ENCODE measurements at regions of chr6 and their contacts with region 1.

Region 1: DNA sequence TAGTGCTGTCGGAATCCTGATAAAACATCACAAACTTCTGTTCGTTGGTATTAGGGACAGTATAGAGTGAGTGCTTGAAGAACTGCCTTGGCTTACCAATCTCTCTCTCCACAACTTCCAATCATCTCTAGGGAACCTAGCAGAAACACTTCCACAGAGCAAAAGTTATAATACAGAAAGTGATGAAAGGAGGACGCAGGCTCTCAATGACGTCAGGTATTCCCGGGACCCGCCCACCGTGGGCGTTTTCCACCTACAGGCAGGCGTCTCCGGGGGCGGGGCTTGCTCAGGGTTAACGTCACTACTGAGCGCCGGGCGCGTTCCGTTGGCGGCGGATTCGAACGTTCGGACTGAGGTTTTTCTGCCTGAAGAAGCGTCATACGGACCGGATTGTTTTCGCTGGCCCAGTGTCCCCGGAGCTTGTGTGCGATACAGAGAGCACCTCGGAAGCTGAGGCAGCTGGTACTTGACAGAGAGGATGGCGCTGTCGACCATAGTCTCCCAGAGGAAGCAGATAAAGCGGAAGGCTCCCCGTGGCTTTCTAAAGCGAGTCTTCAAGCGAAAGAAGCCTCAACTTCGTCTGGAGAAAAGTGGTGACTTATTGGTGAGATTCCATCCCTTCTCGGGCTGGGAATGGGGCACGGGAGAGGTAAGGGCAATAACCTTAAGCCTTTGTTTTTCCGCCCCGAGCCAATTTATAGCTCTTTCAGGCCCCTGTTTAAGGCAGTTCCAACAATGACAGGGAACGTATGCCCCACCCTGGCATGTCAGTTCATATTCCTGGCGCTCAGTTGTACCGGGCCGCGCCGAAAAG is at the start of gene CENPW:
- DNase-seq: peak; percentile 93
- H3K4me3 Mint-ChIP-seq: no peak within 1 kb of the TSS
- H3K27ac Mint-ChIP-seq: no peak within 1 kb of the TSS
- H3K4me1 Mint-ChIP-seq: peaks cover 25% of the 10 kb centered on the region
- H3K27me3 Mint-ChIP-seq: no peaks in the 10 kb centered on the region
- total RNA-seq, gene CENPW: 54.7 and 54.8 TPM in 2 replicates

Region 2: DNA sequence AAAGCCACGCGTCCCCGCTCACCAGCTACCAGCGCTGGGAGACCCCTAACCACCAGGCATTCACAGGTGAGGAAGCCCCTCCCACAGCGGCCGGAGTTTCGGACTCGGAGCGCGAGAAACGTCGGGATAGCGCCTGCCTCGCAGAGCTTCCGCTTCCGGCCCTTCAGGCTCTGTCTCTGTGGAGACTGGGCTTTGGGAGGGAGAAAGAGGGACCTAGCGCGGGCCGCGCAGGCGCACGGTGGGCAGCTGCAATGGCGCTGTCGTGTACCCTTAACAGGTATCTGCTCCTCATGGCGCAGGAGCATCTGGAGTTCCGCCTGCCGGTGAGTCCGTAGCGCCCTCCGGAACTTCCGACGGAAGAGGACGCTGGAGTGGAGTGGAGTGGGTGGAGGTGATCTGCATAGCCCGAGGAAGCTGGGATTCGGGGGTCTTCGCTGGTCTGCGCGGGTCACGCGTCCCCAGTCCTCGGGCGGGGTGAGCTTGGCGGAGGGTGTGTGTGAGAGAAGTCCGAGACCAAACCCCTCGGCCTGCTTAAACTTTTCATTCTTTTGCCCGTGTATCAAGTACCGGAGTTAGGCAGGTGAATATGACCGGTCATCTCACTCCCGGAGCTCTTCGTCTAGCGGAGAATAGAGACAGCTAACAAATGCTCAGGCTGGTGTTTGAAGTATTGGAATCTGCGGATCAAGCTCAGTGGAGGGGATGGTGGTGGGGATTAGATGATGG is 353.5 kb before region 1 on chr6 and contains the start of gene TRMT11:
- intact Hi-C with region 1: loop called (anchors 5 kb)
- DNase-seq: peak; percentile 69
- H3K4me3 Mint-ChIP-seq: peak within 1 kb of the TSS; percentile 9
- H3K27ac Mint-ChIP-seq: no peak within 1 kb of the TSS
- H3K4me1 Mint-ChIP-seq: peaks cover 9% of the 10 kb centered on the region
- H3K27me3 Mint-ChIP-seq: no peaks in the 10 kb centered on the region
- total RNA-seq, gene TRMT11: 23.9 and 25.4 TPM in 2 replicates

Region 3: DNA sequence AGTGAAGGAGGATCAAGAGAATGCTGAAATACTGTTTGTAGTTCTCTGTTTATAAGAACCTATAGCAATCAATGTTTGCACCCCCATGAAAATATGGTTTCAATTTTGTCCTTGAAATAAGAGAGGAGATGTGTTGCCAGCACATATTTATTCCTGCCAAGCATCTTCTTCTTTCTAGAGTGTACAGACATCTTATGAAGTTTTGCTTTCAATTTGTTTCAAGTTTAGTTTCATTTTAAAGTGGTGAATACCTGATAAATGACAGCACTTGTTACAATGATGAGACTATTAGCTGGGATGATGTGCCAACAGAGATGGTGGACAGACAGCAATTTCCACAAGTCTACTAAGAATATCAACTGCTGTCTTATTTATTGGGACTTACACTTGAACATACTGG is 39.3 kb before region 1 on chr6:
- intact Hi-C with region 1: loop called (anchors 5 kb)
- DNase-seq: no peak
- H3K4me3 Mint-ChIP-seq: peak overlapping the region; percentile 19
- H3K27ac Mint-ChIP-seq: no peak overlapping the region
- H3K4me1 Mint-ChIP-seq: peaks cover 14% of the 10 kb centered on the region
- H3K27me3 Mint-ChIP-seq: peaks cover 4% of the 10 kb centered on the region

Measured in activated T-helper 2 cell treated with anti-CD3 and anti-CD28 coated beads, Interferon-gamma antibody, Interleukin-2, Interleukin-4, amounts not matched to agents 10 μg/mL and 5 μg/mL and 100 μg/mL, durations not matched to agents 14 hours and 24 hours and 36 hours (primary cell).